GM12878 (cell line): ENCODE measurements at regions of chr4 and their contacts with region 1.

Region 1: DNA sequence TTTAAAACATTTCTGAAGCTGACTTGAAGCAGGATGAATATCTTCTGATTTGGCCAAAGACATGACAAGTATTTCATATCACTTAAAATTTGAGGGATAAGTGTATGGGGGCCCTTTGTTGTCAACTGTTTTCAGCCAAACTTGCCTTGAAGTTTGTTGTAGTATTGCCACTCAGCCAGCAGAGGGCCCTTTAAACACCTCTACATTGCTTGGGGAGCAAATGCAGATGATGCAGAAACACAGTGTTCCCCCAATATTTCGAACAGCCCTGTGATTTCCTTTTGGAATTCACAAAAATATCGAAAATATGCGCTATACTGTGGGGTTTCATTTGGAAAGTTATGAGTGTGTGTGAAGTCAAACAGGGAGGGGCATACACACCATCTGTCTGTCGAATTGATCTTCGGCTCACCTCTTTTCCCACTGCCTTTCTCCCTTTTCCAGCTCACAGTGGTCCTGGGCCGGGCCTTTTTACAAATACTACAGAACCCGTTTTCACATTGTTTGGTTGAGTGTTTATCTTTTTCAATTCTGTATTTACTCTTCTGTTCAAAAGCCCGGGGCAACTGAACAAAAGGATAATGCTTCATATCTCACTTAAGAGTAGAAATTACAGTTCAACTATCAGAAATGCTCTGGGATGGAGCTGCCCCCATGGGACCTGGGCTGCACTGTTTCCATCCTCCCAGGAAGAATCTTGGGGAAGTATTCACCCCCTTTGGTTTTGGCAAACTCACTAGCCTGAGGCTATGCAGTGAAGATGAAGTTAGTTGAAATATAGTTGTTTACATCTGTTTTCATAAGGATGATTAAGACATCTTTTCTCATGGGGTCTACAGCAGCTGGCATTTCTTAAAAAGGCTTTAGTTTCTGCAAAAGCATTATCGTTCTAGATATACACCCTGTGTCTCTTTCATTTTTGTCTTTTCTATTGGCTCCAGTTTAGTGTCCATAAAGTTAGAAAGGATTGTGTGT is 137.6 kb downstream of the EGF start:
- DNase-seq: peak; percentile 8
- ATAC-seq: peak; percentile 82
- H3K4me3 ChIP-seq: no peak overlapping the region
- H3K27ac ChIP-seq: no peak overlapping the region
- H3K4me1 ChIP-seq: peaks cover 6% of the 10 kb centered on the region
- H3K27me3 ChIP-seq: no peaks in the 10 kb centered on the region
- CTCF ChIP-seq: peak; percentile 79 to 84 (median 82)
- EP300 ChIP-seq: no peak
- POLR2A ChIP-seq: no peak
- RAD21 ChIP-seq: peak; percentile 93

Region 2: GRCh38 chr4:109990261-109991257 is 59.7 kb before region 1 on chr4:
- CTCF ChIA-PET with region 1: interaction called, 14 read pairs
- POLR2A ChIA-PET with region 1: no interaction called
- RAD21 ChIA-PET with region 1: no interaction called
- SMC1A ChIA-PET with region 1: interaction called, 3 read pairs
- in situ Hi-C with region 1: no loop called
- intact Hi-C with region 1: no loop called
- DNase-seq: peak; percentile 87
- ATAC-seq: peak; percentile 88
- H3K4me3 ChIP-seq: peak overlapping the region; percentile 30; the same call in 1 of the 2 replicates
- H3K27ac ChIP-seq: peak overlapping the region; percentile 73
- H3K4me1 ChIP-seq: peaks cover 36% of the 10 kb centered on the region
- H3K27me3 ChIP-seq: no peaks in the 10 kb centered on the region
- CTCF ChIP-seq: no peak
- EP300 ChIP-seq: peak; percentile 79 to 90
- POLR2A ChIP-seq: no peak
- RAD21 ChIP-seq: no peak

Region 3: GRCh38 chr4:110064295-110064694 is 14.1 kb after region 1 on chr4:
- CTCF ChIA-PET with region 1: interaction called, 33 read pairs
- POLR2A ChIA-PET with region 1: interaction called, 6 read pairs
- RAD21 ChIA-PET with region 1: interaction called, 3 read pairs
- SMC1A ChIA-PET with region 1: interaction called, 25 read pairs
- in situ Hi-C with region 1: no loop called
- intact Hi-C with region 1: no loop called
- DNase-seq: no peak
- ATAC-seq: no peak
- H3K4me3 ChIP-seq: no peak overlapping the region
- H3K27ac ChIP-seq: no peak overlapping the region
- H3K4me1 ChIP-seq: peaks cover 13% of the 10 kb centered on the region
- H3K27me3 ChIP-seq: no peaks in the 10 kb centered on the region
- CTCF ChIP-seq: no peak
- EP300 ChIP-seq: no peak
- POLR2A ChIP-seq: no peak
- RAD21 ChIP-seq: no peak

Region 4: GRCh38 chr4:110119337-110119736 is 69.1 kb after region 1 on chr4:
- CTCF ChIA-PET with region 1: interaction called, 14 read pairs
- POLR2A ChIA-PET with region 1: no interaction called
- RAD21 ChIA-PET with region 1: interaction called, 8 read pairs
- SMC1A ChIA-PET with region 1: interaction called, 11 read pairs
- in situ Hi-C with region 1: no loop called
- intact Hi-C with region 1: no loop called
- DNase-seq: no peak
- ATAC-seq: peak; percentile 81
- H3K4me3 ChIP-seq: no peak overlapping the region
- H3K27ac ChIP-seq: peak overlapping the region; percentile 32
- H3K4me1 ChIP-seq: peaks cover 5% of the 10 kb centered on the region; the same call in 1 of the 2 replicates
- H3K27me3 ChIP-seq: no peaks in the 10 kb centered on the region
- CTCF ChIP-seq: no peak
- EP300 ChIP-seq: no peak
- POLR2A ChIP-seq: no peak
- RAD21 ChIP-seq: no peak

Region 5: DNA sequence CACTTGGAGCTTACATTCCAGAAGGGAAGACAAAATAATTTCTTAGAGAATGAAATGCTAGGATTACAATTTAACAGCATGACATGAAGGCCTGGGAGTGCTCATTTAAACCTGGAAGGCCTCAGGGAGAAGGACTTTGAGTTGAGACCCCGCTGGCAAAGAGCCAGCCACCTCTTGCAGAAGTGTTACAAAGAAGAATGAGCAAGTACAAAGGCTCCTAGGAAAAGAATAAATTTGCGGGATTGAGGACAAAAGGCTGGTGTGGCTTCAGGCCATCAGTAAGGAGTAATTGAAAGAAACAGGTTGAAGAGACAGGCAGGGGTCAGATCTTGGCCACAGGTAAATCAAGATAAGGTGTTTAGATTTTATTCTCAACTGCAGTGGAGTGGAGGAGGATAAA is 151.3 kb after region 1 on chr4:
- CTCF ChIA-PET with region 1: interaction called, 51 read pairs
- POLR2A ChIA-PET with region 1: interaction called, 22 read pairs
- RAD21 ChIA-PET with region 1: interaction called, 22 read pairs
- SMC1A ChIA-PET with region 1: interaction called, 15 read pairs
- in situ Hi-C with region 1: loop called (anchors 5 kb)
- intact Hi-C with region 1: loop called (anchors 1 kb)
- DNase-seq: no peak
- ATAC-seq: no peak
- H3K4me3 ChIP-seq: no peak overlapping the region
- H3K27ac ChIP-seq: no peak overlapping the region
- H3K4me1 ChIP-seq: 0 out of 2 replicates have a peak, but pooled peaks cover 4% of the 10 kb centered on the region
- H3K27me3 ChIP-seq: no peaks in the 10 kb centered on the region
- CTCF ChIP-seq: no peak
- EP300 ChIP-seq: no peak
- POLR2A ChIP-seq: no peak
- RAD21 ChIP-seq: no peak

Region 6: GRCh38 chr4:110248831-110249253 is 198.6 kb after region 1 on chr4:
- CTCF ChIA-PET with region 1: no interaction called
- POLR2A ChIA-PET with region 1: no interaction called
- RAD21 ChIA-PET with region 1: no interaction called
- SMC1A ChIA-PET with region 1: interaction called, 10 read pairs
- in situ Hi-C with region 1: no loop called
- intact Hi-C with region 1: no loop called
- DNase-seq: no peak
- ATAC-seq: no peak
- H3K4me3 ChIP-seq: no peak overlapping the region
- H3K27ac ChIP-seq: no peak overlapping the region
- H3K4me1 ChIP-seq: no peaks in the 10 kb centered on the region
- H3K27me3 ChIP-seq: no peaks in the 10 kb centered on the region; a peak in 1 of 4 replicates
- CTCF ChIP-seq: no peak
- EP300 ChIP-seq: no peak
- POLR2A ChIP-seq: no peak
- RAD21 ChIP-seq: no peak

Region 7: DNA sequence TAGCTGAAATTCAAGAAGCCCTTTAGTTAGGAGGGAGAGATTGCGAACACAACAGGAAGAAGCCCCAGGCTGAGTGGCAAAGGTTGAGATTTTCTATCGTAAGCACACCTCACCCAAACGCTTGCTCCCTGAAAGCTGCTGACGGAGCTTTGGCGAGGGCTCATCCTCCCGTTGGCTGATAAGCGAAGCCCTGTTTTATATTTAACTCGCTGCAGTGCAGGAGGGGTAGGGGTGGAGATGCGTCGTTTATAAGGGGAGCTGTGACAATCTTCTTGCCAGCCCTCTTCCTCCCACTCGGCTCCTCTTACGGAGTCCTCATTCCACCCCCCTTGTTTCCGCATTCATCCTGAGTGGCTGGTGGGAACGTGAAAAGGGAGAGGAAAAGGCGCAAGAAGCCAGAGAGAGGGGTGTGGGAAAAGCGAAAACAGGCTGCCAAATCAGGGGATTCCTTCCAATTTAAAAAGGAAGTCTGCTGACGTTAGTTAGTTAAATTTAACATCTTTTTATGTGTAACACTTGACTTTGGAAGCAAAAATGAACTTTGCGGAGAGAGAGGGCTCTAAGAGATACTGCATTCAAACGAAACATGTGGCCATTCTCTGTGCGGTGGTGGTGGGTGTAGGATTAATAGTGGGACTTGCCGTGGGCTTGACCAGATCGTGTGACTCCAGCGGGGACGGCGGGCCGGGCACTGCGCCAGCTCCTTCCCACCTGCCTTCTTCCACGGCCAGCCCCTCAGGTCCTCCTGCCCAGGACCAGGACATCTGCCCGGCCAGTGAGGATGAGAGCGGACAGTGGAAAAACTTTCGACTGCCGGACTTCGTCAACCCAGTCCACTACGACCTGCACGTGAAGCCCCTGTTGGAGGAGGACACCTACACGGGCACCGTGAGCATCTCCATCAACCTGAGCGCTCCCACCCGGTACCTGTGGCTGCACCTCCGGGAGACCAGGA is 425.9 kb after region 1 on chr4 and contains the start of gene ENPEP:
- CTCF ChIA-PET with region 1: no interaction called
- POLR2A ChIA-PET with region 1: no interaction called
- RAD21 ChIA-PET with region 1: no interaction called
- SMC1A ChIA-PET with region 1: no interaction called
- in situ Hi-C with region 1: no loop called
- intact Hi-C with region 1: no loop called
- DNase-seq: no peak
- ATAC-seq: no peak
- H3K4me3 ChIP-seq: no peak within 1 kb of the TSS
- H3K27ac ChIP-seq: no peak within 1 kb of the TSS
- H3K4me1 ChIP-seq: no peaks in the 10 kb centered on the region
- H3K27me3 ChIP-seq: no peaks in the 10 kb centered on the region; a peak in 2 of 4 replicates
- CTCF ChIP-seq: no peak
- EP300 ChIP-seq: no peak
- POLR2A ChIP-seq: no peak
- RAD21 ChIP-seq: no peak
- polyA plus RNA-seq, gene ENPEP: not detected

Region 8: DNA sequence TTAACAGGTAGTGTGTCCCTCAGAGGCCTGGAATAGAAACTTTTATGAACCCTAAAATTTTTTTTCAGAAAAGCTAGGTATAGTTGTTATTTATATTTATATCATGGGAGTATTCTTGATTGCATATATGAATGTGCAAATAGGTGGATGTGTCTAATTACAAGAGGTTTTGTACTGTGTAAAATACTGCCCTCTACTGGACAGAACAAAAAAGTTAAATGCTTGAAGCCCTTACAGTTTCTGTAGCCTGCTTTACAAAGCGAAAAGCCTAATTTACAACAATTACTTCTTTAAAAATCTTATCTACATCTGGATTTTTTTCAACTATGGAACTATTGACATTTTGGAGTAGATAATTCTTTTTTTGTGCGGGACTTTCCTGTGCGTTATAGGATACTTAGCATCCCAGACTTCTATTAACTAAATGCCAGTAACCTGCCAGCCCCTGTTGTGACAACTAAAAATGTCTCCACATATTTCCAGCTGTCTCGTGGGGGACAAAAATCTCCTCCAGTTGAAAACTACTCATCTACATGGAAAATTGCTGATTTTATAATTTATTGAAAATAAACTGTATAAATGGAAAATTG is 460.8 kb after region 1 on chr4:
- CTCF ChIA-PET with region 1: interaction called, 132 read pairs
- POLR2A ChIA-PET with region 1: no interaction called
- RAD21 ChIA-PET with region 1: interaction called, 30 read pairs
- SMC1A ChIA-PET with region 1: interaction called, 14 read pairs
- in situ Hi-C with region 1: no loop called
- intact Hi-C with region 1: loop called (anchors 2 kb)
- DNase-seq: no peak
- ATAC-seq: peak; percentile 86
- H3K4me3 ChIP-seq: no peak overlapping the region
- H3K27ac ChIP-seq: no peak overlapping the region
- H3K4me1 ChIP-seq: no peaks in the 10 kb centered on the region
- H3K27me3 ChIP-seq: no peaks in the 10 kb centered on the region
- CTCF ChIP-seq: peak; percentile 53 to 70 (median 53); a peak in 5 of 6 replicates
- EP300 ChIP-seq: no peak
- POLR2A ChIP-seq: no peak
- RAD21 ChIP-seq: peak; percentile 75